ENCODE measurements at regions of chr11 and their contacts with region 1.

Region 1: DNA sequence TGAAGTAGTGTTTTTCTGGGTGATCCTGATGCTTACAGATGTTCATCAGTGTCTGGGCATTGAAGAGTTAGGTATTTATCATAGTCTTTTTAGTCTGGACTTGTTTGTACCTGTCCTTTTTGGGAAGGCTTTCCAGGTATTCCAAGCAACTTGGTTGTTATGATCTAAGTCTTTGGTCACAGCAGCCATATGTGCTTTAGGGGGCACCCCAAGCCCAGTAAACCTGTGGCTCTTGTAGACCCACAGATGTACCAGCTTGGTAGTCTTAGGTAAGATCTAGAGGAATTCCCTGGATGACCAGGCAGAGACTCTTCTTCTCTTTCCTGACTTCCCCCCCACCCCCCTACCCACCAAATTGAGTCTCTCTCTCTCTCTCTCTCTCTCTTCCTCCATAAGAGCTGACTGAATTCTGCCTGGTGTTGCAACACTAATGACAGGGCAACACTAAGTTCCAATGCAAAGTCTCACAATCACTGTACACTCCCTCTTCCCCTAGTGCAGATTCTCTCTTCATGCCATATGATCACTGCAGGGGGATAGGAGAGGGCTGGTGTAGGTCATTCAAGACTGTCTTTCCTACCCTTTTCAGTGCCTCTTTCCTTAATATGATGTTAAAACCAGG is 24.5 kb upstream of the MMP8 start:
- DNase-seq: no peak
- H3K4me3 ChIP-seq: no peak overlapping the region
- H3K4me3 Mint-ChIP-seq: no peak overlapping the region
- H3K27ac Mint-ChIP-seq: no peak overlapping the region
- H3K4me1 ChIP-seq: no peaks in the 10 kb centered on the region
- H3K4me1 Mint-ChIP-seq: peaks cover 8% of the 10 kb centered on the region
- H3K27me3 ChIP-seq: no peaks in the 10 kb centered on the region
- H3K27me3 Mint-ChIP-seq: no peaks in the 10 kb centered on the region
- CTCF ChIP-seq: no peak

Region 2: DNA sequence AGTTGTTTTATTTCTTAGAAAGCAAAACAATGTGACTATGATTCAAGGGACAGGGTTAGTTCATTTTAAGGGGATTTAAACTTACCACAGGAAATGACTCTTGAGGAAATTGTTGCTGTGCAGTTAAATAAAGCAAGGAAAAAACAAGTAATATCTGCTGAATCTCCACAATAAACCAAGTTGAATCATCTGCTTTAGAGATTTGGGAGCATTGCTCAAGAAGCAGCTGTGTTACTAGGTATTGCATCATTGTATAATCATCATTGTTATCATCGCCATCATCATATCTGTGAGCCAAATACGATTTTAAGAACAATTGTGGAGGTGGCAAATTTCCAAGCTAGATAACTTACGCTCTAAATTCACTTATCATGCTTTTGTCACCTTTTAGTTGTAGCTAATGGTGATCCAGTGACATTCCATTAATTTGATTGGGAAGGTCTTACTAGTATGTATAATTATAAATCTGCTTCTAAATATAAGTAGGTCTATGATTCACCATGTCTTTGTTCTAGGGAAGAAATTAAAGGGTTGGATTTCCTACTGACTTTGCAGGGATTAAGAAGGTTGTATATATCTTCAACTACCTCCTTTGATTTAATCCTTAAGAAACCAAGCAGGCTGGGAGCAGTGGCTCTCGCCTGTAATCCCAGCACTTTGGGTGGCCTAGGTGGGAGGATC is 11.3 kb after region 1 on chr11:
- CTCF ChIA-PET with region 1: no interaction called
- POLR2A ChIA-PET with region 1: no interaction called
- intact Hi-C with region 1: loop called (anchors 2 kb)
- DNase-seq: peak in 1 of 2 experiments; percentile 33
- H3K4me3 ChIP-seq: no peak overlapping the region
- H3K4me3 Mint-ChIP-seq: no peak overlapping the region
- H3K27ac Mint-ChIP-seq: peak overlapping the region; percentile 15
- H3K4me1 ChIP-seq: peaks cover 63% of the 10 kb centered on the region
- H3K4me1 Mint-ChIP-seq: peaks cover 51% of the 10 kb centered on the region
- H3K27me3 ChIP-seq: no peaks in the 10 kb centered on the region
- H3K27me3 Mint-ChIP-seq: no peaks in the 10 kb centered on the region
- CTCF ChIP-seq: no peak

Measured in Caco-2 (cell line).